ENCODE measurements at regions of chr11 and their contacts with region 1.

Region 1: DNA sequence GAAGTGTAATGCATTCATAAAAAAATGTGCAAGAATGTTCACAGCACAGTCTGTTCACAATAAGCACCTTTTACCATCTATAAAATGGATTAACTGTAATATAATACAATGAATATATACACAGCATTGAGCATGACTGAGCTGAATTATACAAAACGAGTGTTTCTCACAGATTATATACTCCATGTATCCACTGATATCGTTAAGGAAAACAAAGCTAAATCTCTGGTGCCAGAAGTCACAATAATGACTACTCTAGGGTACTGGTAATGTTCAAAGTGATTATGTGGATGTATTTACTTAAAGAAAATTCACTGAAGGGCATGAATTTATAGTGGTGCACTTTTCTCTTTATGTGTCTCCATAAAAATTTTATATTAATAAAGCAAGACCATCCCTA is 33.2 kb downstream of the ACAT1 start:
- DNase-seq: no peak
- ATAC-seq: no peak
- H3K4me3 ChIP-seq: no peak overlapping the region
- H3K27ac ChIP-seq: no peak overlapping the region
- H3K4me1 ChIP-seq: no peaks in the 10 kb centered on the region
- H3K27me3 ChIP-seq: no peaks in the 10 kb centered on the region
- CTCF ChIP-seq: no peak

Region 2: GRCh38 chr11:108093128-108093904 is 61.3 kb before region 1 on chr11:
- intact Hi-C with region 1: loop called in 1 of 10 experiments (anchors 10 kb)
- DNase-seq: no peak
- ATAC-seq: no peak
- H3K4me3 ChIP-seq: no peak overlapping the region
- H3K27ac ChIP-seq: no peak overlapping the region
- H3K4me1 ChIP-seq: peaks cover 0 to 8% (median 0%) of the 10 kb centered on the region in 9 donors
- H3K27me3 ChIP-seq: no peaks in the 10 kb centered on the region
- CTCF ChIP-seq: no peak

Region 3: DNA sequence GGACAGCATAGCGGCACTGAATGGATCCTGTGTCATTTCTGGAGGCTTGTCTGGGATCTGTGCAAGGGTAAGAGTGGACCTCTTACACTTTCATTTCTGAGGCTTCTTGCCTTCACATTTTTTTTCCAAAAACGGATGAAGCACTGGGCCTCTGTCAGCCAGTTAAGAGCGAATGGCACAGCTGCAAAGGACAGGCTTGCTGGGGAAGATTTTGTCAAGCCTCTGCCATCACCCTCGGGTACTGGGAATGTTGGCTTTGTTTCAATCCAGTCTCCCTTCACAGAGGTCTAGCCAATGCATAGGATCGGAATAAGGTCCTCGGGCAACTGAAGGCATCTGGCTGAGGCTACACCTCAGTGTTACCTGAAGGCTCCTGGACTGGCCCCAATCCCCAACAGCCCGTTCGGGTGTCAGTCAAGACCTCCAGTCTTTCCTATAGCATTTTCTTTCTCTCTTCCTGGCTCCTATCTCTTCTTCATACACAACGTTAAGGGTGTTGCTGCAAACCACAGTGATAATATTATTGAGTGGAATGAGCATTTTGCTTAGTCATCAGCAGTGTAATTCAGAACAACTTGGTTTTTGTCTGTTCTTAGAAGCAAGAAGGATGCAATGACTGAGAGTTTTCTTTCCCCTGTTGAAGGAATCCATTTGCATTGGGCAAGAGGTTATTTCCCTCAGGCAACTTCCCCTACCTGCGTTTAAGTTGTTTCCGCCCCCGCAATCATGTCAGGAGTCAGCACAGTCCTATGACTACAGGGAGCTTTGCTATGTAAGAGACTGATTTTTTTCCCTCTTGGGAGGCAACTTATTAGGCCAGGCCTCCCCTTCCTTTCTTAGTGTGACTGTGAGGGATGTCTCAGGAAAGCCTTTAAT is 45.1 kb after region 1 on chr11:
- intact Hi-C with region 1: no loop called
- DNase-seq: no peak
- ATAC-seq: peak in 1 of 8 donors; percentile 34
- H3K4me3 ChIP-seq: no peak overlapping the region
- H3K27ac ChIP-seq: peak overlapping the region in 1 of 10 donors; percentile 42
- H3K4me1 ChIP-seq: peaks cover 0 to 23% (median 4%) of the 10 kb centered on the region in 9 donors
- H3K27me3 ChIP-seq: no peaks in the 10 kb centered on the region
- CTCF ChIP-seq: no peak

Region 4: DNA sequence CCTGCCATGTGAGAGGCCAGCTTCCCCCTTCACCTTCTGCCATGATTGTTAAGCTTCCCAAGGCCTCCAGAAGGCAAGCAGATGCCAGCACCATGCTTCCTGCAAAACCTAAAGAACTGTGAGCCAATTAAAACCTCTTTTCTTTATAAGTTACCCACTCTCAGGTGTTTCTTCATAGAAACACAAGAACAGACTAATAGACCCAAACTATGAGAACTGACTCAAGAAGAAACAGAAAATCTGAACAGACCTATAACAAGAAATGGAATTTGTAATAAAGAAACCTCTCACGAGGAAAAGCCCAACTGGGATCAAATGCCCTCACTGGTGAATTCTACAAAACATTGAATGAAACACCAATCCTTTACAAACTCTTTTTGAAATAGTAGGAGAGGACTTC is 55.9 kb after region 1 on chr11:
- intact Hi-C with region 1: no loop called
- DNase-seq: no peak
- ATAC-seq: no peak
- H3K4me3 ChIP-seq: no peak overlapping the region
- H3K27ac ChIP-seq: no peak overlapping the region
- H3K4me1 ChIP-seq: no peaks in the 10 kb centered on the region
- H3K27me3 ChIP-seq: no peaks in the 10 kb centered on the region
- CTCF ChIP-seq: no peak

Region 5: GRCh38 chr11:108289699-108290098 is 135.1 kb after region 1 on chr11:
- intact Hi-C with region 1: loop called in 1 of 10 experiments (anchors 10 kb)
- DNase-seq: no peak
- ATAC-seq: no peak
- H3K4me3 ChIP-seq: no peak overlapping the region
- H3K27ac ChIP-seq: no peak overlapping the region
- H3K4me1 ChIP-seq: no peaks in the 10 kb centered on the region
- H3K27me3 ChIP-seq: no peaks in the 10 kb centered on the region
- CTCF ChIP-seq: no peak